IMR-90 (cell line): ENCODE measurements at regions of chr2 and their contacts with region 1.

Region 1: DNA sequence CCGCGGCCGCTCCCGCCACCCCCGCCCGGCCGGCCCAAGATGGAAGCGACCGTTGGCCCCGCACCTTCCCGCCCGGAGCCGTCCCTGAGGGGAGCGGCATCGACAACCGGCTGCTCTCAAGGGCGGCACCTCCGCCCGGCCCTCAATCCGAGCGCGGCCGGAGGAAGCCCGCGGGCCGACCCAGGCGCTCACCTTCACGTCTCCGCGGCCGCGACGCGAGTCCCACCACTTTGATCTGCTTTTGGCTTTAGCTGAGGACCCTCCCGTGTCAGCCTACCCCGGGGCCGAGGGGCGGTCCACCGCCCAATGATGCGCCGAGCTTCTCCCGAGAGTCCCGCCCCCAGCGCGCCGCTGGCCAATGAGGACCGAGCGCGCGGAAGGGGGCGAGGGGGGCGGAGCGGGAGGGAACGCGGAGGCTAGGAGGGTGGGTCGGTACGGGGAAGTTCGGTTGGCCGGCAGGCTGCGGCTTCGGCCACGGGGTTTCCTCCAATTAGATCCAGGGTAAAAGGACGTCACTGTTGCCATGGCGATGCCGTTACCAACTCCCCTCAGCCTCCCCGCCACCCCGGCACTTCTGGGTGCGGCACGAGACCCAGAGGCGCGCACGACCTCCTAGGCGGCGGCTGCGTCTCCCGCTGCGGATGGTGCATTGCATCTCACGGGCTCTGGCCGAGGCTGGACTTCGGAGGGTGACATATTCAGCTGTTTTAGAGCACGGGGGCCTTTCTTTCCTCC is at the start of gene YWHAQ:
- DNase-seq: peak; percentile 99
- ATAC-seq: peak; percentile 97
- H3K4me3 ChIP-seq: peak within 1 kb of the TSS; percentile 97
- H3K27ac ChIP-seq: peak within 1 kb of the TSS; percentile 98
- H3K4me1 ChIP-seq: peaks cover 12% of the 10 kb centered on the region
- H3K27me3 ChIP-seq: no peaks in the 10 kb centered on the region
- CTCF ChIP-seq: no peak
- POLR2A ChIP-seq: peak; percentile 99
- RAD21 ChIP-seq: peak; percentile 40
- total RNA-seq, gene YWHAQ: 196 and 249 TPM in 2 replicates

Region 2: GRCh38 chr2:9555297-9556141 is 75.4 kb before region 1 on chr2 and contains the start of gene ADAM17:
- CTCF ChIA-PET with region 1: no interaction called
- POLR2A ChIA-PET with region 1: interaction called, 5 read pairs
- dilution Hi-C with region 1: no loop called
- in situ Hi-C with region 1: no loop called
- intact Hi-C with region 1: loop called (anchors 2 kb)
- DNase-seq: peak; percentile 95
- ATAC-seq: peak; percentile 92
- H3K4me3 ChIP-seq: peak within 1 kb of the TSS; percentile 83
- H3K27ac ChIP-seq: peak within 1 kb of the TSS; percentile 97
- H3K4me1 ChIP-seq: peaks cover 4% of the 10 kb centered on the region
- H3K27me3 ChIP-seq: no peaks in the 10 kb centered on the region
- CTCF ChIP-seq: peak; percentile 64
- POLR2A ChIP-seq: peak; percentile 93
- RAD21 ChIP-seq: peak; percentile 46
- total RNA-seq, gene ADAM17: 34.4 and 46.4 TPM in 2 replicates

Region 3: DNA sequence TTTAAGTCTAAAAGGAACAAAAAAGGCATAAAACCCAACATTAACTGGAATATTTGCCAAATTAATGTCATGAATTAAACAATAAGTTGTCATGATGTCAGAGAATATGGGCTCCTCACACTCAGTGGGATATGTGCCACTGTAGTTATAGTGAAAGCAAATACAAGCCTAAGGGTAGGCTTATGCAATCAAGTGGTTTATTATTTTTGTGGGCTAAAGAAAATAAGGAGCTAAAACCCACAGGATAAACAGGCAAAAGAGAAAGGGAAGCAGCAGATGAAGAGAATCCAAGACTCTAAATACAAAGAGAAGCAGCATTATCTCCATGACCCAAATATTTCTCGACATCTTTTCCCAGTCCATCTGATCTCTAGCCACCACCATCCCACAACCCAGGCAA is 17.6 kb before region 1 on chr2:
- CTCF ChIA-PET with region 1: no interaction called
- POLR2A ChIA-PET with region 1: interaction called, 4 read pairs
- dilution Hi-C with region 1: no loop called
- in situ Hi-C with region 1: no loop called
- intact Hi-C with region 1: loop called (anchors 2 kb)
- DNase-seq: peak; percentile 91
- ATAC-seq: peak; percentile 85
- H3K4me3 ChIP-seq: no peak overlapping the region
- H3K27ac ChIP-seq: no peak overlapping the region
- H3K4me1 ChIP-seq: peaks cover 20% of the 10 kb centered on the region
- H3K27me3 ChIP-seq: no peaks in the 10 kb centered on the region
- CTCF ChIP-seq: no peak
- POLR2A ChIP-seq: no peak
- RAD21 ChIP-seq: peak; percentile 26; the same call in 1 of the 2 replicates

Region 4: DNA sequence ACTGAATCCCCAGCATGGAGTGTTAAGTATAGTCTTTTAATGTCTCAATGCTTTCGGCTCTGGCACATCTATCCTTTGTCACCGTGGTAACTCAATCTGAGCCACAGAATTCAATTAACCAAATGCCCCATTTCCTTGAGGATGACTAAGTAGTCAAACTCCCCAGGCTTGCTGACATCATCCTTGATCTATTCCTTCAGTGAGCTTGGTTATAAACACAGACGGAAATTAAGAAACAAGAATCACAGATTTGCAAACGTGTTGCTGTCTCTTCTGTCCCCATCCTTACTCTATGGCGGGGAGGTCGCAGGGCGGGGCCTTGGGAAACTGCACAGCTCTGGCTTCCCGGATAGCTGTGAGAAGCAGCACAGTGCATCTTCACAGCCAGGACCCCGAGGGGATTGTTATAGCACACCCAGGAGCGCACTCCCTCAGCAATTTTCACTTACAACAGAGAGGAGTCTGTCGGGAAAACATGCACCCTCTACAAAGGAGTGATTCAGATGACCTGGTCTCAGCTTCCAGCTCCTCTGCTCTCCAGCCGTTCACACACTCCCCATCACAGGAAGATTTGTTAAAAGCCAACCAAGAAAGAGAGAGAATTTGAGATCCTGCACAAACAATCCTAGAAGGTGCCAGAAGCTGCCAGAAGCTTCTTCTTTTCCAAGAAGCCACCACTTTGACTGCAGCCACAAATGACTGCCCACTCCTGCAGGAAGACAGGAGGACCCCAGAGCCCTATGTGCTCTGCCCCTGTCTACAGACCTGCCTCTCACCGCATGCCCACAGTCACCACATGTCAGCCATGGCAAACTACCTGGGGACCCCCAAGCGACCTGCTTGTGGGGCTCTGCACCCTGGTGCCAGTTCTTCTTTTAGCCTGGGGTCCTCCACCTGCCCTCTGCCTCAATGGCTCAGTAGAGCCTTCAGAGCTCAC is 44.8 kb after region 1 on chr2:
- CTCF ChIA-PET with region 1: interaction called, 16 read pairs
- POLR2A ChIA-PET with region 1: no interaction called
- dilution Hi-C with region 1: no loop called
- in situ Hi-C with region 1: no loop called
- intact Hi-C with region 1: loop called (anchors 5 kb)
- DNase-seq: peak; percentile 96
- ATAC-seq: peak; percentile 93
- H3K4me3 ChIP-seq: peak overlapping the region; percentile 33
- H3K27ac ChIP-seq: peak overlapping the region; percentile 76
- H3K4me1 ChIP-seq: peaks cover 10% of the 10 kb centered on the region
- H3K27me3 ChIP-seq: no peaks in the 10 kb centered on the region
- CTCF ChIP-seq: no peak
- POLR2A ChIP-seq: no peak
- RAD21 ChIP-seq: peak; percentile 4; the same call in 1 of the 2 replicates